Left cardiac atrium (tissue), 4 donors: ENCODE measurements at regions of chr12 and their contacts with region 1.

Region 1: DNA sequence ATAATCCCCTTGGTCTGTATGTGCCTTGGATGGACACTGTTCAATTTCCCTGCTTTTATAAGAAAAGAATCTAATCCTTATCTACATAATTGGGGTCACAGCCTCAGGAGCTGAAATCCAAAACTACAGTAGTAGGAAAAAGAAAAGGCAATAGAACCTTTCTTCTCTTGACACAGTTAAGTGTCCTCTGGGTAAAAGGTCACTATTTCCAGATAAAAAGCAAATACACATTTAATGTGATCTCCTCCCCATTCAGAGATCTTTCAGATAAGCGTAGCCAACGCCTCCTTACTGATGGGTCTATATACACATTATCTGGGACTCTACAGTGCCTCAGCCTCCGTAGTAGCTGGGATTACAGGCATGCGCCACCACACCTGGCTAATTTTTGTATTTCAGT is 73.4 kb downstream of the CLIP1 start:
- DNase-seq: no peak
- ATAC-seq: no peak

Region 2: GRCh38 chr12:122421821-122422729 is 73.0 kb after region 1 on chr12 and contains the start of gene CLIP1:
- intact Hi-C with region 1: loop called in 1 of 2 experiments (anchors 10 kb)
- DNase-seq: peak; percentile 72
- ATAC-seq: peak; percentile 88 to 90
- total RNA-seq, gene CLIP1: 101 to 124 TPM

Region 3: GRCh38 chr12:123075646-123076171 is 726.6 kb after region 1 on chr12:
- intact Hi-C with region 1: no loop called
- DNase-seq: no peak
- ATAC-seq: peak; percentile 8 to 19